GM18951 (cell line): ENCODE measurements at regions of chr9 and their contacts with region 1.

Region 1: DNA sequence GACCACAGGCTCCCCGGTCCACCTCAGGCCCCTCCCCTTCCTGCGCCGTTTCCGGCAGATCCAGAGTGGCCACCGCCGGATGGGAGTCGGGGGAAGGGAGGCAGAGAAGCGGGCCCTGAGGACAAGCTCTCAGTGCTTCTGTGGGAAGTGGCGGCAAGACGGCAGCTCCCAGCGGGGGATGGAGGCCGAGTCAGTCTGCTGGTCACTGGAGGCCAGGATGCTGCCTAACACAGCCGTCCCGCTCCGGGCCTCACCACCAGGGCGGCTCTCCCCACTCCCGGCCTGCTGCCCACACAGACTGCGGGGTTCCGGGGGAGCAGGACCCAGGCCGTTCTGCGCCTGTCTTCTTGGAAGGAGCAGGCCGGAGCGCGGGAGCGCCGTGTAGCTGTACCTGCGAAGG is 31.4 kb downstream of the FXN start:
- POLR2A ChIP-seq: no peak

Region 2: DNA sequence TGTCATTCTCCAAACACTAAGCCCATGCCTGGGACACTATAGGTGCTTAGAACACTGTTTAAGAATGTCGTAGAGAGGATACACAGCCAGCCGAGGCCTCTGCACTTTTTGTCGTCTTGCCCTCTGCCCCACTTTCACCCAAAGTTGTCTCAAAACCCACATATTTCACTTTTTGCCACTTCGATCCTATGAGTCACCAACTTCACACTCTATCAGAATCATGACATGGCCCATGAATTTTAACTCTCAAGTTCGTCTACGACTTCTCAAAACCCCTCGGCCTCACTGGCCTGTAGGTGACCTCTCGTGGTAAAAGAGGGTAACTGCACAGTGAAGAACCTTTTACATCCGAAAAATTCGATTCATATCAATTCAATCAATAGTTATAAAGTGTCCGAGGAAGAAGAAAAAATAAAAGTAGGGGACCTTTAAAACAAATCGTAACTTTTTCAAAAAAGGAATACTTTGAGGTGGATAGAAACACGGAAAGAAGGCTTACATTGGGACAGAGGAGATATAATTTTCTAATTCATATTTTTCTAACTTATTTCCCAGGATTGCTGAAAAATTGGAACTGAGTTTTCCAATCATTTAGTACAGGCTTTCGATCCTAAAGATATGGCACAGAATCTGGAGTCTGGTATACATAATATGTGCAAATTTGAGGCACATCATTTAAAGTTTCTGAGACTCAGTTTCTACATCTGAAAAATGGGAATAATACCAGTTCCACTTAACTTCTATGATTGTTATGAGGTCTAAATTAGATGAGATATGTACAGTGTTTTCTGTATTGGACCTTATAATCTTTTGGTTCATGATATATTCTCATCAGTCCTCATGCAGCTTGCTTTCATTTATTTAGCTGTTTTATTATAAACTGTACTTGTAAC is 482.6 kb after region 1 on chr9:
- in situ Hi-C with region 1: loop called (anchors 25 kb)
- POLR2A ChIP-seq: no peak